ENCODE measurements at regions of chrX and their contacts with region 1.

Region 1: DNA sequence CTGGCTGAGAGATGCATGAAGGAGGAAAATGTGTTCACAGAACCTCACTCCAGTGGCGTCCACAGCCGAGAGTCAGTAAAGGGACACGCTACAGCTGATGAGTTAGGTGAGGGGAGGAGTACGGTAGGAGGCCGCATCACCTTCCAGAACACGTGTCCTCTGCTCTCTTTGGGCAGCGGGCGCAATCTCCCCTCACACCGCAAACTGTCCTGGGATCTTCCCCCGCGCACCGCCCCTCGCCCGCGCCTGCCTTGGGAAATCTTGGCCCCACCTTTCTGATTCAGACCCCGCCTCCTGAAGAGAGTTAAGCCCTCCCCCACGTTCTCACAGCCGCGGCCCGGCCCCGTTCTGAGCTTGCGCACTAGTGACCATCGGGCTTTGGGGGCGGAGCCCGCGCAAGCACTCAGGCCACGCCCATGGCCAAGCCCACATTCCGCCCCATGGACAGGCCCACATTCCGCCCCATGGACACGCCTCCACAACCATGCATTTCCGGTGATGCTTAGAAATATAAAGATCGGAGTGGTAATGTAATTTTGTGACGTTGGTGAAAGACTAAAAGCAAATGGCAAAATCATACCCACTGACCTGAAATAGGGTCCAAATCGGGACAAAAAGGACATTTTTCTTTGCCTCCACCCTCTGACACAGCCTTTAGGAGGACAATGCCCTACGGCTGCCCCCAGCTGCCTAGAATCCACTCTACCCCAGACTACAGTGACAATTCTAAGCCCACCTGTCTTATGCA is 13.3 kb downstream of the SMIM10 start:
- H3K4me3 Mint-ChIP-seq: peak overlapping the region; percentile 80
- H3K27ac Mint-ChIP-seq: peak overlapping the region; percentile 57
- H3K4me1 Mint-ChIP-seq: peaks cover 7% of the 10 kb centered on the region
- H3K27me3 Mint-ChIP-seq: peaks cover 2% of the 10 kb centered on the region

Region 2: GRCh38 chrX:134898440-134898839 is 105.6 kb before region 1 on chrX:
- intact Hi-C with region 1: no loop called
- H3K4me3 Mint-ChIP-seq: no peak overlapping the region
- H3K27ac Mint-ChIP-seq: no peak overlapping the region
- H3K4me1 Mint-ChIP-seq: no peaks in the 10 kb centered on the region
- H3K27me3 Mint-ChIP-seq: no peaks in the 10 kb centered on the region

Region 3: GRCh38 chrX:134938682-134939081 is 65.4 kb before region 1 on chrX:
- intact Hi-C with region 1: no loop called
- H3K4me3 Mint-ChIP-seq: no peak overlapping the region
- H3K27ac Mint-ChIP-seq: no peak overlapping the region
- H3K4me1 Mint-ChIP-seq: no peaks in the 10 kb centered on the region
- H3K27me3 Mint-ChIP-seq: no peaks in the 10 kb centered on the region

Region 4: GRCh38 chrX:134969726-134970125 is 34.3 kb before region 1 on chrX:
- intact Hi-C with region 1: loop called (anchors 1 kb)
- H3K4me3 Mint-ChIP-seq: no peak overlapping the region
- H3K27ac Mint-ChIP-seq: no peak overlapping the region
- H3K4me1 Mint-ChIP-seq: peaks cover 3% of the 10 kb centered on the region
- H3K27me3 Mint-ChIP-seq: peaks cover 9% of the 10 kb centered on the region

Region 5: GRCh38 chrX:135050603-135051002 is 46.6 kb after region 1 on chrX:
- intact Hi-C with region 1: loop called (anchors 10 kb)
- H3K4me3 Mint-ChIP-seq: peak overlapping the region; percentile 73
- H3K27ac Mint-ChIP-seq: peak overlapping the region; percentile 94
- H3K4me1 Mint-ChIP-seq: peaks cover 18% of the 10 kb centered on the region
- H3K27me3 Mint-ChIP-seq: no peaks in the 10 kb centered on the region